AG04449 (cell line): ENCODE measurements at regions of chr7 and their contacts with region 1.

Region 1: DNA sequence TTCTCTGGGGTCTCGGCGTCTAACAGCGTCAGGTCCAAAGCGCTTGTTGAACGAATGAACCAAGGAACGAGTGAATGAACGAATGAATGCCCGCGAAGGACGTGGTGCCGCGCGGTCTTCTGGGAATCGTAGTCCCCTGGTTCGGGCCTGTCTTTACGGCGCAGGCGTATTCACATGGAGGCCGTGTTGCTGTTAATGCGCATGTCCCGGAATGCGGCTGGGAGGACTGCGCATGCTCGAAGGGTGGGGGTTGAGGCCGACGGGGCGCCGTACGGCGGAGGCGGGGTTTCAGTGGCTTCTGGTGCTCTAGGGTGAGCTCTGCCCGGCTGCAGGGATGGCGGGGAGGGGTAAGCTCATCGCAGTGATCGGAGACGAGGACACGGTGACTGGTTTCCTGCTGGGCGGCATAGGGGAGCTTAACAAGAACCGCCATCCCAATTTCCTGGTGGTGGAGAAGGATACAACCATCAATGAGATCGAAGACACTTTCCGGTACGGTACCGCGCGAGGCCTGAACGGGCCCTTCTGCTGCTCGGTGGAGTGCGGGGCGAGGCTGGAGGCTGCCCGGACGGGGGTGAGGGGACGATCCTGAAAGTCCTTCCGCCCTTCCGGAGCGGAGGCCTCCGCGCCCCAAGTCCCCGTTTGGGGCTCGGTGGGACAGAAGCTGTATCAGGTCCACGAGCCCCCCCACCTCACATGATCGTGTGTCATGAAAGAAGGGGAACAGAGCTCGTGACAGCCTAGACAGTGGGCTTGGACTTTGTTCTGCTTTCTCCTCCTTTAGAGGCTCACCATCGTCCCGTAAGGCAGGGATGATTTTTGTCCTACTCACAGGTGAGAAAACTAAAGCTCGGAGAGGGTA is at the start of gene ATP6V1F:
- DNase-seq: peak; percentile 71
- H3K4me3 ChIP-seq: peak within 1 kb of the TSS; percentile 85
- CTCF ChIP-seq: no peak

Region 2: GRCh38 chr7:128841921-128842651 is 20.7 kb before region 1 on chr7:
- CTCF ChIA-PET with region 1: interaction called, 48 read pairs
- POLR2A ChIA-PET with region 1: interaction called, 4 read pairs
- DNase-seq: no peak
- H3K4me3 ChIP-seq: no peak overlapping the region
- CTCF ChIP-seq: peak; percentile 69

Region 3: DNA sequence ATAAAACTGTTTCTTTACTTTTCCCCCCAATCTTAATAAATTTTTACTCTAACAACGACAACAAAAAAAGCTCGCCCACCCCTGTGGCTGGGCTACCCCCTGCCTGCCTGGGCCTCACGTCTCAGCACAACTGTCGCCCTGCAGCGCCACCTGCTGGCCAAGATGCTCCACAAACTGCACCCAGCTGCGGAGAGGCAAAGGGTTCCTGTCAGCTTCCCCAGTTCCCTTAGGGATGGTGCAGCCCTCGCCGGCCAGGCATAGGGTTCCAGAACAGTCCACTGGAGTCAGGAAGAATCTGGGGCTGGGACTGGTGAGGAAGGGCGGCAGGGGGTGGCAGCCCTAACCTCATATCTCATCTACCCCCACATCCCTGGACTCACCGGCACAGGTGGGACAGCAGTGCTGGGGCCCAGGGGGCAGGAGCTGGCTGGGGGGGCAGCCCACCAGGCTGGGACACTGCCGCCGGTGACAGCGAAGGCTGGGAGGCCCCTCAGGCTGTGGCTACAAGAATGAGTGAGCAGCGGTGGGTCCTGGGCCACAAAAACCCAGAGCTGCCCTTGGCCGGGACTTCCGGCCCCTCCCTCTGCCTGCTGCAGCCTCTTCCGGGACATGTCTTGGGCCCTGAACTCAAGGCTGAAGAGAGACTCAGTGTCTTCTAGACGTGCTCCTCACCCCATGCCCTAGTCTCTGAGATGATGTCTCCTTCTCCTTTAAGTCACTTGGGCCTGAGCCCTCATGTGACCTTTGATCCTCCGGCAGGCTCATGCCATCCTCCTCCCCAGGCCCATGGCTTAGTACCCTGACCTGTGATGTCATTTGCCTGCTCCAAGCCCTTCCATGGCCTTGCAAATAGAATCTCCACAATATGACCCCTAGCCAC is 21.1 kb after region 1 on chr7:
- CTCF ChIA-PET with region 1: interaction called, 203 read pairs
- POLR2A ChIA-PET with region 1: interaction called, 6 read pairs
- DNase-seq: no peak
- H3K4me3 ChIP-seq: no peak overlapping the region
- CTCF ChIP-seq: peak; percentile 97